ENCODE measurements at regions of chrX and their contacts with region 1.

Region 1: DNA sequence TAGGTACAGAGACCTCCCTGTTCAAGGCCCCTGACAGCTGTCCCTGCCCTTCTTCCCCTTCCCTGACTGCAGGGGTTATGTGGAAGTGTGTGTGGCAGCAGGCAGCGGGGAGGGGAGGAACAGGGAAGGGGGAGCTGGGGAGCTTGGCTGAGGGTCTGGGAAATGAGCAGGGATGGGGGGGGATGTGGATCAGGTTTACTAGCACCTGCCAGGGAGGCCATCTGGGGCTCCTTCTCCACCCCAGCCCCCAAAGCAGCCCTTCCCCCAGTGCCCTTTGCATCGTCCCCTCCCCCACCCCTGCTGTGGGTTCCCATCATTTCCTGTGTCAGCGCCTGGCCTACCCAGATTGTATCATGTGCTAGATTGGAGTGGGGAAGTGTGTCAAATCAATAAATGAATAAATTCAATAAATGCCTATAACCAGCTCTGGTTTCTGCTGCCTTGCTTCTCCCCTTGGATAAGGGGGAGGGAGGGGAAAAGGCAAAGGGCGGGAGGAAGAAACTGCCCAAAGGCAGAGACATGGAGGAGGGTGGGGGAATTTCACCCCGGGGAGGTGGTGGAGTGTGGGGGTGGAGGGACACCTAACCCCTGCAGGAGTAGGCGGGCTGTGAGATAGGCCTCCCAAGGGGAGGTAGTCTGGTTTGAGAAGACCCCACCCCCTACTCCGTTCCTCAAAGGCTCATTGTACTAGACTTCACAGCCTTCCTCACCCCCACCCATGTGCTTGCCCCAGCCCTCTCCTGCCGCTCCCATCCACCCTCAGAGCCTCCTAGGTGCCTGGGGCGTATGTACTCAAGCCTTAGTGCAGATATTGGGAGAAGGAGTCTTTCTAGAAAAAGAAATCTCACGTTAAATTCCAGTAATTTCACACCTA is 3.2 kb downstream of the CXorf65 start:
- DNase-seq: peak; percentile 70
- H3K4me3 Mint-ChIP-seq: peak overlapping the region; percentile 73
- H3K27ac Mint-ChIP-seq: peak overlapping the region; percentile 93
- H3K4me1 Mint-ChIP-seq: peaks cover 81% of the 10 kb centered on the region
- H3K27me3 Mint-ChIP-seq: no peaks in the 10 kb centered on the region

Region 2: GRCh38 chrX:71118032-71118984 is 15.0 kb after region 1 on chrX and contains the start of gene MED12:
- CTCF ChIA-PET with region 1: interaction called, 39 read pairs
- DNase-seq: peak; percentile 87
- H3K4me3 Mint-ChIP-seq: peak within 1 kb of the TSS; percentile 78
- H3K27ac Mint-ChIP-seq: peak within 1 kb of the TSS; percentile 86
- H3K4me1 Mint-ChIP-seq: peaks cover 35% of the 10 kb centered on the region
- H3K27me3 Mint-ChIP-seq: no peaks in the 10 kb centered on the region

Region 3: DNA sequence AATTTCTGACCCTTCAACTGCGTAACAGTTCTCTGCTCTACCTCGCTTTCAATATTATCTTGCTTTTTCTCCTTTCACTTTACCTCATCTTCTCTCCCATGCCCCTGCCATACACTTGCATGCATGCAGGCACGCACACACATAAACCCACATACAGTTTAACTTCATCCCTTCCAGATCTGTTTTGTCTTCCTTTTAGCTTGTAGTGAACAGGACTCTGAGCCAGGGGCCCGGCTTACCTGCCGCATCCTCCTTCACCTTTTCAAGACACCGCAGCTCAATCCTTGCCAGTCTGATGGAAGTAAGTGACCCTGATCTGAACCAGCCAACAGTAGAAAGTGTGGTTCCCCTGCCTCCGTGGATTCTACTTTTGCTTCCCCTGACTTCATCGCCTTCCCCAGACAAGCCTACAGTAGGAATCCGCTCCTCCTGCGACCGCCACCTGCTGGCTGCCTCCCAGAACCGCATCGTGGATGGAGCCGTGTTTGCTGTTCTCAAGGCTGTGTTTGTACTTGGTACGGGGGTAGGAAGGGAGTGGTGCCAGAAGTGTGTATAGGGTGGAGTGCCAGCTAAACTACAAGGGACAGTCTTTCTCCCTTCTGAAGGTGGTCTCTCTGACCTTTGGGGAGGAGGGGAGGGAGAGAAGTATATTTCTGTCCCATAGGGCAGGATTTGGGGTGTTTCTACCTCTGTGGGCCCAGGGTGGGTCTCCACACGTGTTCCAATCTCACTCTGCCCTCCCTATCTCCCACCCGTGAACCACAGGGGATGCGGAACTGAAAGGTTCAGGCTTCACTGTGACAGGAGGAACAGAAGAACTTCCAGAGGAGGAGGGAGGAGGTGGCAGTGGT is 25.8 kb after region 1 on chrX:
- CTCF ChIA-PET with region 1: interaction called, 97 read pairs
- DNase-seq: peak; percentile 81
- H3K4me3 Mint-ChIP-seq: peak overlapping the region; percentile 9
- H3K27ac Mint-ChIP-seq: peak overlapping the region; percentile 84
- H3K4me1 Mint-ChIP-seq: peaks cover 15% of the 10 kb centered on the region
- H3K27me3 Mint-ChIP-seq: no peaks in the 10 kb centered on the region

Region 4: DNA sequence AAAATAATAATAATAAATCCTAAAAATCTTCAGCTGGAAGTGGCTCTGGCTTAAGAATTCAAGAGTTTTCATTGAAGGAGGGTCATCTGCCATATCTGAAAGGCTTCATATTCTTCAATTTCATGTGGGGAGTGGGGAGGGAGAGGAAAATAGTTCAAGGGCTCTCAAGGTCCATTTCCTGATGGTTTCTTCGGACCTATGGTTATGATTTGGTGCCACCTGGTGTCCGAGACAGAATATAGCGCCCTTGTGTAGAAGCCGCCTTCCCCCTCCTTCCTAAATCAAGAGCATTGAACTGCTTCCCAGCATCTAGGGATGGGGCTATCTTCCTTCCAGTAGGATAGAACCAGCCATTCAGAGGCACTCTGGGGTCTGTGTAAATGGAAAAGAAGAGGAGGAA is 75.6 kb after region 1 on chrX:
- CTCF ChIA-PET with region 1: interaction called, 13 read pairs
- DNase-seq: peak; percentile 52
- H3K4me3 Mint-ChIP-seq: no peak overlapping the region
- H3K27ac Mint-ChIP-seq: peak overlapping the region; percentile 49
- H3K4me1 Mint-ChIP-seq: peaks cover 28% of the 10 kb centered on the region
- H3K27me3 Mint-ChIP-seq: no peaks in the 10 kb centered on the region

Measured in activated naive CD4-positive, alpha-beta T cell treated with anti-CD3 and anti-CD28 coated beads, Interleukin-2, amount 10 ng/mL, durations not matched to agents 7 days and 5 days (primary cell).